WTC11 (cell line): ENCODE measurements at regions of chr10 and their contacts with region 1.

Region 1: DNA sequence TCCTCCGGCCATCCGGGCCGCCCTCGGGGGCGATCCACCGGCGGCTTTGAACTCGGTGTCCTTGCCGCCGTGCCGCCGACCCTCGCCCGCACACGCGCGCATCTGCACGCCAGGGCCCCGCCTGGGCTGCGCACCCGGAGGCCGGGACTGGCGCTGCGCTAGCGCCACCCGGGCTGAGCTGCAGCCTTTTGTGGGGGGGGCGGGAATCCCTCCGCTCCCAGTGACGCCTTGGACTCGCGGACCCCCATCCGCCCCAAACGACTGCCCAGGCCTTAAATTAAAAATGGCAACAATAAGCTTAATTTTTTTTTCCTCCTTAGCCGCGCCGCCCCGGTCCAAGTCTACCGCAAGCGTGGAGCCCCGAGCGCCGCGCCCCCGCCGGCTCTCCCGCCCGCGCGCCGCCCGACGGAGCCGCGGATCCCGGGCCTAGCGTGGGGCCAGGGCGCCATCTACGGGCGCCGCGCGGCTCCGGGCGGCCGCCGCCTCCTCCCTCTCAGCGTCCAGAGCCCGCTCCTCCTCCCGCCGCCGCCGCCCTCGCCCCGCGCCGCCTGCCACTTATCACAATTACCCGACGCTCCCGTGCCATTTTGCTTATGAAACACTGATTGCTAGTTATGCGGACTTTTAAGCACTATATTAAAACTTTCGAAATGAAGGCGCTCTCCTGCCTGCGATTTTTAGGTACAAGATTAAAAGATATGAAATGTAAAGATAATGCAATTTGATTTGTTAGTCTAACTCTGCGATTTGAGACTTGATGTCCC is 7.5 kb upstream of the EBF3 start:
- DNase-seq: peak; percentile 69
- ATAC-seq: peak; percentile 38
- H3K4me3 Mint-ChIP-seq: peak overlapping the region; percentile 64
- H3K27ac Mint-ChIP-seq: no peak overlapping the region
- H3K4me1 Mint-ChIP-seq: peaks cover 35% of the 10 kb centered on the region
- H3K27me3 Mint-ChIP-seq: peaks cover 91% of the 10 kb centered on the region
- CTCF ChIP-seq: no peak

Region 2: GRCh38 chr10:129765664-129766550 is 205.7 kb before region 1 on chr10:
- CTCF ChIA-PET with region 1: interaction called, 12 read pairs
- POLR2A ChIA-PET with region 1: no interaction called
- DNase-seq: peak; percentile 3
- ATAC-seq: no peak
- H3K4me3 Mint-ChIP-seq: no peak overlapping the region
- H3K27ac Mint-ChIP-seq: no peak overlapping the region; the same call in 1 of the 2 replicates
- H3K4me1 Mint-ChIP-seq: peaks cover 8% of the 10 kb centered on the region
- H3K27me3 Mint-ChIP-seq: no peaks in the 10 kb centered on the region
- CTCF ChIP-seq: no peak

Region 3: DNA sequence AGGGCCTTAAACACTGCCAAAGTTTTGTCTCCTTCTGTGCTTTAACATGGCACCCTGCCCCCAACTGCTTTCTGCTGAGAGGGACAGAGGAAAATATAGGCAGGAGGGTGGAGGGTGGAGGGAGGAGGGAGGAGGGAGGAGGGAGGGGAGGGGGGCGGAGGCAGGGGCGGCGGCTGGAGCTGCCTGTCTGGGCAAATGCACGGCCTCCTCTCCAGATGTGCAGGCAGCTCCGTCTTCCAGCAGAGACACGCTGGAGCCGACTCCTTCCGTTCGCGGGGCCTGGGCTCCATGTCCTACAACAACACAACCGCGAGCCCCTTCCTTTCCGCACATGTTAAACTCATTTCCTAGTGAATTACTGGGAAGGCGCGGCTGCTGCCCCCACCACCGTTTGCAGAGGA is 21.7 kb before region 1 on chr10:
- CTCF ChIA-PET with region 1: interaction called, 12 read pairs
- POLR2A ChIA-PET with region 1: no interaction called
- DNase-seq: peak; percentile 62
- ATAC-seq: peak; percentile 84
- H3K4me3 Mint-ChIP-seq: peak overlapping the region; percentile 62
- H3K27ac Mint-ChIP-seq: no peak overlapping the region
- H3K4me1 Mint-ChIP-seq: peaks cover 38% of the 10 kb centered on the region
- H3K27me3 Mint-ChIP-seq: peaks cover 36% of the 10 kb centered on the region
- CTCF ChIP-seq: no peak

Region 4: GRCh38 chr10:129992356-129992755 is 20.8 kb after region 1 on chr10:
- CTCF ChIA-PET with region 1: no interaction called
- POLR2A ChIA-PET with region 1: no interaction called
- DNase-seq: no peak
- ATAC-seq: no peak
- H3K4me3 Mint-ChIP-seq: no peak overlapping the region
- H3K27ac Mint-ChIP-seq: no peak overlapping the region
- H3K4me1 Mint-ChIP-seq: no peaks in the 10 kb centered on the region
- H3K27me3 Mint-ChIP-seq: no peaks in the 10 kb centered on the region
- CTCF ChIP-seq: no peak